ENCODE measurements at regions of chr17 and their contacts with region 1.

Region 1: DNA sequence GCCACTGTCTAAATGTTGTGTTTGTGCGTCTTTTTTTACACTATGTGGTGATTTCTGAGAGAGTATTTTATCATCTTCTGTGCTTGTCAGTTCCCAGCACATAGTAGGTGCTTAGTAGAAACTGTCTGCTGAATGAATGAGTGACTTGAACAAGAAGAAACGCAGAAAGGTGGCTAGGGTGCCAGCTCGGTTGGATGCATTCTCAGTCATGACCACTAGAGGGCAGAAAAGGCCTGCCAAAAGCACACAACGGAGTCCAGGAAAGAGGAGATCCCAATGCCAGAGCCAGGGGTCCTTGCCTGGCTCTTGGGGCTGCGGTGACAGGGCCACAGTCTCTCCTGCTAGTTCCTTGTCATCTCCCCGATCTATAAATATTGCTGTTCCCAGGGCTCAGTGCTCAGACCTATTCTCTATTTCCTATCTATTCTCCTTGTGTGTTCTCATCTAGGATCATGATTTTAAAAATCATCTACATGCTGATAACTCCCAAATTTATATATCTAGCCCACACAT is 57.3 kb upstream of the CCL1 start:
- DNase-seq: no peak
- H3K4me3 ChIP-seq: no peak overlapping the region
- H3K27ac ChIP-seq: no peak overlapping the region
- H3K4me1 ChIP-seq: peaks cover 0 to 8% (median 0%) of the 10 kb centered on the region in 6 donors
- H3K27me3 ChIP-seq: peaks cover 0 to 64% (median 20%) of the 10 kb centered on the region in 7 donors
- CTCF ChIP-seq: peak; percentile 78 to 96 (median 93)
- POLR2A ChIP-seq: no peak

Region 2: DNA sequence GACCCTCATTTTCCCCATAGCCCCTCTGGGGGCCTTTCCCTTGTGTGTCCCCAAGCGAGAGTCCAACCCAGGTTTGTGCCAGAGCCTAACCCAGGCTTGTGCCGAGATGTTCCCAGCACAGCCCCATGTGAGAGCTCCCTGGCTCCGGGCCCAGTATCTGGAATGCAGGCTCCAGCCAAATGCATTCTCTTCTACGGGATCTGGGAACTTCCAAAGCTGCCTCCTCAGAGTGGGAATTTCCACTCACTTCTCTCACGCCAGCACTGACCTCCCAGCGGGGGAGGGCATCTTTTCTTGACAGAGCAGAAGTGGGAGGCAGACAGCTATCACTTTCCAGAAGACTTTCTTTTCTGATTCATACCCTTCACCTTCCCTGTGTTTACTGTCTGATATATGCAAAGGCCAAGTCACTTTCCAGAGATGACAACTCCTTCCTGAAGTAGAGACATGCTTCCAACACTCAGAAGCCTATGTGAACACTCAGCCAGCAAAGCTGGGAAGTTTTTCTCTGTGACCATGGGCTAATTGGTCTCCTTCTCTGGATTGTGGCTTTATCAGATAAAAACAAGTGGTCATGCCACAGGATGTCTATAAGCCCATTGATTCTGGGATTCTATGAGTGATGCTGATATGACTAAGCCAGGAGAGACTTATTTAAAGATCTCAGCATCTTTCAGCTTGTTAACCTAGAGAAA is 167.7 kb before region 1 on chr17:
- intact Hi-C with region 1: no loop called
- DNase-seq: peak; percentile 82
- H3K4me3 ChIP-seq: no peak overlapping the region
- H3K27ac ChIP-seq: peak overlapping the region in 7 of 8 donors; percentile 36 to 74 (median 58)
- H3K4me1 ChIP-seq: peaks cover 28 to 80% (median 54%) of the 10 kb centered on the region in 6 donors
- H3K27me3 ChIP-seq: peaks cover 0 to 56% (median 0%) of the 10 kb centered on the region in 7 donors
- CTCF ChIP-seq: no peak
- POLR2A ChIP-seq: no peak

Region 3: GRCh38 chr17:34637548-34638525 is 217.5 kb after region 1 on chr17:
- intact Hi-C with region 1: loop called (anchors 10 kb)
- DNase-seq: peak; percentile 90
- H3K4me3 ChIP-seq: peak overlapping the region; percentile 35 to 75 (median 46)
- H3K27ac ChIP-seq: no peak overlapping the region
- H3K4me1 ChIP-seq: peaks cover 4 to 19% (median 16%) of the 10 kb centered on the region in 6 donors
- H3K27me3 ChIP-seq: peaks cover 0 to 87% (median 22%) of the 10 kb centered on the region in 7 donors
- CTCF ChIP-seq: peak; percentile 69 to 93 (median 86)
- POLR2A ChIP-seq: no peak

Region 4: DNA sequence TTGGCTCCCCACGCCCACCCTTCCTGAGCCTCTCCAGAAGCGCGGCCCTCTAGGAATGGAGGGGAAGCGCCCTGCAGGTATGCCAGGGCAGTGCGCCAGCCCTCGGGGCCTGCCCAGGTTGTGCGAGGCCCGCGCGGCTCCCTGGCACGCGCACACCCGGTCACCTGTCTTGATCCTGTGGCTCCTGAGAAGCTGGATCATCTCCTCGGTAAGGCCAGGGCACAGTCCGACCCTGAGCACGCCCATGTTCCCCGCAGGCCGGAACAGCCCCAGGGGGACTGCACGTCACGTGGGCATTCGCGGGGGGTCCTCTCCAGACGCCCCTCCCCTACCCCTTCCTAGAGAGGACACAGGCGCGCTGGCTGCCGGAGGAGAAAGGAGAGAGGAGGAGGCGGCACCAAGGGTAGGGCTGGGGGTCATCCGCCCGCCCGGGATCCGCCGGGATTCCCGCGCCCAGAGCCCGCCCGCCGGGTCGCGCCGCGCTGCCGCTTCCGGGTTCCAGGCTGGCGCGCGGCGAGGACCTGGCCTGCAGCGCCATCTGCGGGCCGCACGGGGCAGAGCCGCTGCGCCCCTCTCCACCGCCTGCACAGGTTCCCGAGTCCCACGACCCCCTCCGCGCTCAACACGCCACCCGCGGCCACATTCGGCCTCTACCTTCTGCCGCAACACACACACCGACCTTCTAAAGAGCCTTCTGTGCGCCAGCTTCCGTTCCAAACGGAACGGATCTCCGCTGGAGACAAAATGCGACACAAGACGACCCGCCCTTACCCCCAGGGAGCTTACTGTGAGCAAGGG is 699.3 kb after region 1 on chr17 and contains the start of gene RAD51D:
- intact Hi-C with region 1: loop called (anchors 5 kb)
- DNase-seq: peak; percentile 96
- H3K4me3 ChIP-seq: peak within 1 kb of the TSS; percentile 66 to 97 (median 88)
- H3K27ac ChIP-seq: peak within 1 kb of the TSS; percentile 68 to 92 (median 84)
- H3K4me1 ChIP-seq: peaks cover 12 to 45% (median 28%) of the 10 kb centered on the region in 6 donors
- H3K27me3 ChIP-seq: no peaks in the 10 kb centered on the region
- CTCF ChIP-seq: peak; percentile 85 to 99 (median 98)
- POLR2A ChIP-seq: peak in 1 of 3 donors; percentile 35
- total RNA-seq, gene RAD51D: 9.0 to 24.1 (median 14.9) TPM